Posterior cingulate gyrus (tissue), 11 donors: ENCODE measurements at regions of chr1 and their contacts with region 1.

Region 1: DNA sequence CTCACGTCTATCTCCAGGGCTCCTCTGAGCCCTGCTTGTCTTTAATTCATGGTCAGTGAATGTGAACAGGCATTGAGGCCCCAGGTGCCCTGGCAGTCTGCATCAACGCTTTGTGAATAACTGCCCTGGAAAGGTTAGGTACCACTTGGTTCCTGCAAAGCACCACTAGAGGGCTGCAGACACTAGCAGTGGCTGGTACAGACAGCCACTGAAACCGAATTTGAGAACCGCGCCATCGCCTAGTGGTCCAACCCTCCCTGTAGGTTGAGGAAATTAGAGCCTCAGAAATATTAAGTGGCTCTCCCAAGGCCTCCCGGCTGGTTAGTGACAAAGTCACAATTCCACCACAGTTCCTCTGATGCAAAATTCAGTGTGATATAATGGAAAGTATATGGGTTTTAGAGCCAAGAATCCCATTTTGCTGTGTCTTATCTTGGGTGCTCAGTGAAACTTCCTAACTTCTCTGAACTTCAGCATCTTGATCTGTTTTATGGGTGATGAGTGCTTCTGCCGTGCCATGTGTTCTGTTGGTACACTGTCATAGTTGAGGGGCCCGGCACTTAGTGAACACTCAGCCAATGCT is 46.2 kb upstream of the BCL9 start:
- DNase-seq: peak; percentile 37 to 95 (median 76)

Region 2: GRCh38 chr1:147545133-147545532 is 50.0 kb after region 1 on chr1:
- intact Hi-C with region 1: loop called (anchors 1 kb)
- DNase-seq: peak in 4 of 10 donors; percentile 6 to 84 (median 42)

Region 3: DNA sequence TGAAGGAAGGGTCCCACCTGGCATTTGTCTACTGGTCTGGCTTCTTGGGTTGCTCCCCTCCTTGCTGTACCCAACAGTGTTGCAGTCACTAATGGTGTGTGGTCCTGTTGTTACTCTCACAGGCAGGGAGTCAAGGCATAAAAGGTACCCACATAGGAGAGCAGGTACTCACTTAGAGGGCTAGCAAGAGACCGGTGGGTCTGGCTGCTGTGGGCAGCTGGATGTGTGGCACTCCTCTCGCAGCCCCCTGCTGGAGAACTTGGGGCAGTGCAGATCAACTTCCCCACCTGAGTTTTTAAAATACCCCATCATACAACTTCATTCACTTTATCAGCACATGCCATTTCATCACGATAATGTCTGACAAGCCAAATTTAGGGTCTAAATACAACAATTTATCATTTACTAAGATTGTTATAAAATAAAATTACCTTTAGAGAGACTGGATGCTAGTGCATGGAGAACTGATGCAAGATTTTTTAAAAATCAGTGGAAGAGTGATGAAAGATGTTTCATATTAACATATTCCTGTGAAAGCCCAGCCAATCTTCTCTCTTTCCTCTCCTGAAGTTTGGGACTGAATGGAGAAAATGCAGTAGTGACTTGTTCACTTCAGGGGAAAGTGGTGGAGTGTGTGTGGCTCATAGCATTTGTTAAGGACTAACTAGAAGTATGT is 132.5 kb after region 1 on chr1:
- intact Hi-C with region 1: loop called (anchors 5 kb)
- DNase-seq: peak in 4 of 10 donors; percentile 37 to 91 (median 48)

Region 4: GRCh38 chr1:147640553-147641165 is 145.6 kb after region 1 on chr1:
- intact Hi-C with region 1: loop called (anchors 5 kb)
- DNase-seq: peak in 6 of 10 donors; percentile 47 to 92 (median 54)

Region 5: GRCh38 chr1:147892731-147893214 is 397.7 kb after region 1 on chr1:
- intact Hi-C with region 1: loop called (anchors 1 kb)
- DNase-seq: peak in 3 of 10 donors; percentile 35 to 91 (median 38)